GM12878 (cell line): ENCODE measurements at regions of chr2 and their contacts with region 1.

Region 1: DNA sequence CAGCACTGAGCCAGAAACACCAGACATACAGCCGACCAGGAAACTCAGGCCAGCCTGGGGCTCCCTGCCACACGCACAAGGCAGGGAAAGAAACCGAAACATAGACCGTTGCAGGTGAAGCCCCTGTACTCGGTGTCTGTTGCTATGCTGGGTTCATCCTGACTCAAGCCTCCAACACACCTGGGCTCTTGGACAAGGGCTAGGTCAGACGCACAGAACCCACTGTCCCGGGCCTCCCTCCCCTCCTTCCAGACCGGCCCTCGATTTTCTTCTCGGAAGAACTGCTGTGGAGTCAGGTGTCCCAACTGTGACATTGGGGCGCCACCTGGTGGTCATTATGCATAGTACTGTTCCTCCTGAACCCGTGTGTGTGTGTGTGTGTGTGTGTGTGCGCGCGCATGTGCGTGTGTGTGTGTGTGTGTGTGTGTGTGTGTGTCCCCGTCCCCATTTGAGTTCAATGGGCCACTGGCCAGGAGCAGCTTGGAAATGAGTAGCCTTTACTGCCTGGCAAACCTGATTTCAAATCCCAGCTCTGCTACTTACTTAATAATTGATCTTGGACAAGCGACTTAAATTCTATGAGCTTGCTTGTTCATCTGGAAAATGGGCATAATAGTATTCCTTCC is 55.4 kb upstream of the GLI2 start:
- DNase-seq: peak; percentile 8
- ATAC-seq: peak; percentile 95
- H3K4me3 ChIP-seq: no peak overlapping the region
- H3K27ac ChIP-seq: no peak overlapping the region
- H3K4me1 ChIP-seq: no peaks in the 10 kb centered on the region
- H3K27me3 ChIP-seq: peaks cover 0 to 2% of the 10 kb centered on the region in 2 experiments; a peak in 1 of 4 replicates
- CTCF ChIP-seq: peak; percentile 63 to 72 (median 66)
- EP300 ChIP-seq: no peak
- POLR2A ChIP-seq: no peak
- RAD21 ChIP-seq: peak; percentile 82

Region 2: GRCh38 chr2:119641562-119642258 is 1038.5 kb before region 1 on chr2:
- CTCF ChIA-PET with region 1: interaction called, 4 read pairs
- POLR2A ChIA-PET with region 1: no interaction called
- RAD21 ChIA-PET with region 1: interaction called, 3 read pairs
- SMC1A ChIA-PET with region 1: no interaction called
- in situ Hi-C with region 1: no loop called
- intact Hi-C with region 1: loop called (anchors 5 kb)
- DNase-seq: peak; percentile 40
- ATAC-seq: peak; percentile 99
- H3K4me3 ChIP-seq: no peak overlapping the region
- H3K27ac ChIP-seq: no peak overlapping the region
- H3K4me1 ChIP-seq: no peaks in the 10 kb centered on the region
- H3K27me3 ChIP-seq: no peaks in the 10 kb centered on the region; a peak in 1 of 4 replicates
- CTCF ChIP-seq: peak; percentile 97
- EP300 ChIP-seq: no peak
- POLR2A ChIP-seq: no peak
- RAD21 ChIP-seq: peak; percentile 88

Region 3: GRCh38 chr2:119702918-119703401 is 977.3 kb before region 1 on chr2:
- CTCF ChIA-PET with region 1: interaction called, 8 read pairs
- POLR2A ChIA-PET with region 1: no interaction called
- RAD21 ChIA-PET with region 1: interaction called, 4 read pairs
- SMC1A ChIA-PET with region 1: no interaction called
- in situ Hi-C with region 1: loop called (anchors 10 kb)
- intact Hi-C with region 1: no loop called
- DNase-seq: no peak
- ATAC-seq: peak; percentile 97
- H3K4me3 ChIP-seq: no peak overlapping the region
- H3K27ac ChIP-seq: no peak overlapping the region
- H3K4me1 ChIP-seq: peaks cover 14% of the 10 kb centered on the region
- H3K27me3 ChIP-seq: no peaks in the 10 kb centered on the region; a peak in 1 of 4 replicates
- CTCF ChIP-seq: peak; percentile 96 to 99 (median 98)
- EP300 ChIP-seq: no peak
- POLR2A ChIP-seq: no peak
- RAD21 ChIP-seq: peak; percentile 88

Region 4: DNA sequence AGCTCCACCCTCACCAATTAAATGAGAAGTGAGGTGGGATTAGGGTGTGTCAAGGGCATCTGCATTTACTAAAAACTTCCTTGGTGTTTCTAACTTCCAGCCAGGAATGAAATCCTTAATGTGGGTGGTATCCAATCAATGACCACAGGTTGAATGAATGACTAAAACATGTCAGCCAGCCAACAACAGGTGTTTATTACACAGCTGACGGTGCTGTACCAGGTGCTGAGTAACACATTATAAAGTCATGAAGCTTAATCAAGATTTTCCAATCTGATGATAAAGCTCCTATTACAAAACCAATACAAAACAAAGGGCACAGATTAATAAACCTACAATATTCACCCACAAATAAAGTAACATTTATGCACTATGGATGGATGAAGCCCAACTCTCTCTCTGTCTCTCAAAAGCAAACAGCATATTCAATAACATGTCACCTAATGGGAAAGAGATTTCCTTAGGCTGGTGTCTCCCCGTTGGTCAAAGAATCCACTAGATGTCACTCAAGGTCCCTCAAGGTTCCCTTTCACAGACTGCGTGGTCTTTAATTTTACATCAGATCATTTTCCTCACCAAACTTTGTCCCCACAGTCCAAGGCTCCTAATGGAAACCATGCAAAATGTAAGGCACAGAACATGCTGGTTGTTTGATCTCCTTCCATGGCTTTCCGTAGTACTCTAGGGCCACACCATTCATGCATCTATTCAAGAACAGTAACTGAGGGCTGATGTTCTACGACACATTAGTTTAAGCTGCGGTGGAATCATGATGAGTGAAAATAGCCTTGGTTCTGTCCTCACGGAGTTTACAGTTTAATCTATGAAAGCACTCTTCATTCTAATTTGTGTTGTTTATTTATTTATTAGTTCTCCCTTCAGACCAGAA is 927.0 kb before region 1 on chr2:
- CTCF ChIA-PET with region 1: no interaction called
- POLR2A ChIA-PET with region 1: no interaction called
- RAD21 ChIA-PET with region 1: no interaction called
- SMC1A ChIA-PET with region 1: no interaction called
- in situ Hi-C with region 1: no loop called
- intact Hi-C with region 1: loop called (anchors 5 kb)
- DNase-seq: no peak
- ATAC-seq: peak; percentile 91
- H3K4me3 ChIP-seq: no peak overlapping the region
- H3K27ac ChIP-seq: no peak overlapping the region
- H3K4me1 ChIP-seq: no peaks in the 10 kb centered on the region
- H3K27me3 ChIP-seq: peaks cover 0 to 5% of the 10 kb centered on the region in 2 experiments; a peak in 1 of 4 replicates
- CTCF ChIP-seq: peak; percentile 68 to 81 (median 73)
- EP300 ChIP-seq: no peak
- POLR2A ChIP-seq: no peak
- RAD21 ChIP-seq: peak; percentile 92

Region 5: DNA sequence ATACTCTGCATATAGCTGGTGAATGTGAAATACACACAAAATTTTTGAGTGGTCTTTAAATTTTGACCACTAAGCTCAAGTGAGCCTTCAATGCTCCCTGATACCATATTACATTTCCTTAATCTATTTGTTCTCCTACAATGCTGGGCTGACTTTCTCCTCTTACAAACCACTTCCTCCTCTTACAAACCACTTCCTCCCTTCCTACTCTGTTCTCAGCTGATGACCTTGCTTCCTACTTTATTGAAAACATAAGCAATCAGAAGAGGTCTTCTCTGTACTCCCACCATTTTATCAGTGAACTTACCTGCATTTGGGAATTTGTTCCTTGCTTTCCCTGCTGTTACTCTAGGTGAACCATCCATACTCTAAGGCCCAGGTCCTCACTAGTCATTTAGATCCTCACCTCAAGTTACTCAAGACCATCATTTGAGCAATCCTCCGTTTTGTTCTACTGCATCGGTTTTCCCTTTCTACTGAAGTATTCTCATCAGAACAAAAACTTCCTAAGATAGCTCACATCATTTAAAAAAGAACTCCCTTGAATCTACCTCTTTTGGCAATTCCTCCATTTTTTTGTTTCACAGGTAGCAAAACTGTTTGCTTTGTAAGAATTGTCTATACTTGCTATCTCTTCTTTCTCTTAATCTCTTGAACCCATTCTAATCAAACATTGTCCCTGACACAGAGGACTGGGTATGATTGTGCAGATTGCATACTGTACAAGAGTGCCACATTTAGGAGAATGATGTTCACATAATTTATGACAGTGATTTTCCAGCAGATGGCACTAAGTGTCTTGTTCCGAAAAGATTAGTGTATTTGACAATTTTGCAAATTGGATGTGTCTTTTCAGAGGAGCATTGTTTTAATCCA is 570.8 kb before region 1 on chr2:
- CTCF ChIA-PET with region 1: interaction called, 5 read pairs
- POLR2A ChIA-PET with region 1: no interaction called
- RAD21 ChIA-PET with region 1: no interaction called
- SMC1A ChIA-PET with region 1: no interaction called
- in situ Hi-C with region 1: loop called (anchors 10 kb)
- intact Hi-C with region 1: no loop called
- DNase-seq: peak; percentile 19
- ATAC-seq: peak; percentile 71
- H3K4me3 ChIP-seq: no peak overlapping the region
- H3K27ac ChIP-seq: no peak overlapping the region
- H3K4me1 ChIP-seq: peaks cover 7% of the 10 kb centered on the region
- H3K27me3 ChIP-seq: no peaks in the 10 kb centered on the region
- CTCF ChIP-seq: peak; percentile 28 to 55 (median 46); a peak in 5 of 6 replicates
- EP300 ChIP-seq: no peak
- POLR2A ChIP-seq: no peak
- RAD21 ChIP-seq: peak; percentile 67

Region 6: GRCh38 chr2:120223034-120223912 is 457.0 kb before region 1 on chr2 and contains the start of gene TMEM185B:
- CTCF ChIA-PET with region 1: no interaction called
- POLR2A ChIA-PET with region 1: no interaction called
- RAD21 ChIA-PET with region 1: no interaction called
- SMC1A ChIA-PET with region 1: no interaction called
- in situ Hi-C with region 1: loop called (anchors 25 kb)
- intact Hi-C with region 1: no loop called
- DNase-seq: no peak
- ATAC-seq: peak; percentile 94
- H3K4me3 ChIP-seq: peak within 1 kb of the TSS; percentile 81
- H3K27ac ChIP-seq: peak within 1 kb of the TSS; percentile 83
- H3K4me1 ChIP-seq: peaks cover 22% of the 10 kb centered on the region
- H3K27me3 ChIP-seq: no peaks in the 10 kb centered on the region
- CTCF ChIP-seq: peak; percentile 24 to 50 (median 30); a peak in 5 of 6 replicates
- EP300 ChIP-seq: peak in 1 of 2 experiments; percentile 45; a peak in 1 of 4 replicates
- POLR2A ChIP-seq: peak; percentile 94
- RAD21 ChIP-seq: peak; percentile 33; the same call in 1 of the 2 replicates
- polyA plus RNA-seq, gene TMEM185B: 2.4 to 3.2 TPM

Region 7: GRCh38 chr2:120343433-120344105 is 336.7 kb before region 1 on chr2:
- CTCF ChIA-PET with region 1: interaction called, 3 read pairs
- POLR2A ChIA-PET with region 1: no interaction called
- RAD21 ChIA-PET with region 1: interaction called, 3 read pairs
- SMC1A ChIA-PET with region 1: interaction called, 3 read pairs
- in situ Hi-C with region 1: no loop called
- intact Hi-C with region 1: loop called (anchors 5 kb)
- DNase-seq: no peak
- ATAC-seq: peak; percentile 74
- H3K4me3 ChIP-seq: no peak overlapping the region
- H3K27ac ChIP-seq: no peak overlapping the region
- H3K4me1 ChIP-seq: no peaks in the 10 kb centered on the region
- H3K27me3 ChIP-seq: peaks cover 14 to 24% of the 10 kb centered on the region in 2 experiments
- CTCF ChIP-seq: peak; percentile 46 to 53 (median 49)
- EP300 ChIP-seq: no peak
- POLR2A ChIP-seq: no peak
- RAD21 ChIP-seq: peak; percentile 67

Region 8: DNA sequence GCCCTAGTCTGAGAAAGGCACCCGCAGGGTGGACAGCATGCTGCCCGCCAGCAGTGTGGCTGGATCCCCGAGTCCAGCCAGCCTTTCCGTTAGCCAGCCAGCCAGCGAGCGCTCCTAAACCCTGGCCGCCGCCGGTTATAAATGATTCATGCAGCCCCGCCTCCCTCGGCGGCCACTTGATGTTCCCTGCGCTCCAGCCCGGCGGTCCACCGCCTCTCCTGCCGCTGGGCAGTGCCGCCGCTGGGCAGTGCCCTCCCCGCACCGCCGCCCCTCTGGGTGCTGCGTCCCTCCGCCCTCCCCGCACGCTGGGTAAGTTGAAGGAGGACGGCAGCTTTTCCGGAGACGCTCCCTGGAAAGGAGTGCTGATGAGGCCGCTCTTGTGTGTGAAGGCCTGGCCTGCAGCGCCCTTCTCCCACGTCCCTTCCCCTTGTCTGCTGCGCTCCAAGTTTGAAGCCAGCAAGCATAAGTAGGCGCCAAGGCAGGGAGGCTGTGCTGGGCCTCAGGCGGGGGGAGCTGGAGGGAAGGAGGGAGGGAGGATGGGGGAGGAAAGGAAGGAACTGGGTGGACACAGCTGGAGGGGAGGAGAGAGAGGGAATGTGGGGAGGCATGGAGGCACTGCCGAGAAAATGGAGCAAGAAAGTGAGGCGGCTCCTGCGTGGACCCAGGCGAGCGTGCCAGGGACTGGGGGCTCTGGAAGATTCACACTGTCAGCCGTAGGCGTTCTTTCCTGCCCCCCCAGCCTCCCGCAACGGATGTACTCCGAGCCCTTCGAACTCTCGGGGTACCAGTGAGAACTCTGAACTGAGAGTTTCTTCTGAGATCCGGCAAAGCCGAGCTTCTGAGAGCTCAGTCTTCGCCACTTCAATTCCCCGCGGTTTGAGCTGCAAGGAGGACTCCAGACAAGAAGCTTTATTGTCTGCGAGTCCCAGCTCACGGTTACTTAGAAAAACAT is 187.3 kb after region 1 on chr2:
- CTCF ChIA-PET with region 1: no interaction called
- POLR2A ChIA-PET with region 1: no interaction called
- RAD21 ChIA-PET with region 1: no interaction called
- SMC1A ChIA-PET with region 1: no interaction called
- in situ Hi-C with region 1: no loop called
- intact Hi-C with region 1: no loop called
- DNase-seq: no peak
- ATAC-seq: no peak
- H3K4me3 ChIP-seq: no peak overlapping the region
- H3K27ac ChIP-seq: no peak overlapping the region
- H3K4me1 ChIP-seq: no peaks in the 10 kb centered on the region
- H3K27me3 ChIP-seq: peaks cover 5 to 11% of the 10 kb centered on the region in 2 experiments; a peak in 3 of 4 replicates
- CTCF ChIP-seq: no peak
- EP300 ChIP-seq: no peak
- POLR2A ChIP-seq: no peak
- RAD21 ChIP-seq: no peak